ENCODE measurements at regions of chr20 and their contacts with region 1.

Region 1: GRCh38 chr20:35994994-35995453 is 26.6 kb downstream of the CNBD2 start:
- DNase-seq: peak; percentile 83
- ATAC-seq: peak; percentile 92
- H3K4me3 Mint-ChIP-seq: no peak overlapping the region
- H3K27ac Mint-ChIP-seq: no peak overlapping the region
- H3K4me1 Mint-ChIP-seq: peaks cover 4% of the 10 kb centered on the region
- H3K27me3 Mint-ChIP-seq: peaks cover 10% of the 10 kb centered on the region

Region 2: GRCh38 chr20:35954200-35954906 is 40.7 kb before region 1 on chr20 and contains the start of gene SCAND1:
- CTCF ChIA-PET with region 1: interaction called, 21 read pairs
- DNase-seq: peak; percentile 99
- ATAC-seq: peak; percentile 89
- H3K4me3 Mint-ChIP-seq: peak within 1 kb of the TSS; percentile 90
- H3K27ac Mint-ChIP-seq: peak within 1 kb of the TSS; percentile 100
- H3K4me1 Mint-ChIP-seq: peaks cover 23% of the 10 kb centered on the region
- H3K27me3 Mint-ChIP-seq: no peaks in the 10 kb centered on the region
- total RNA-seq, gene SCAND1: 61.2 to 63.9 TPM

Region 3: DNA sequence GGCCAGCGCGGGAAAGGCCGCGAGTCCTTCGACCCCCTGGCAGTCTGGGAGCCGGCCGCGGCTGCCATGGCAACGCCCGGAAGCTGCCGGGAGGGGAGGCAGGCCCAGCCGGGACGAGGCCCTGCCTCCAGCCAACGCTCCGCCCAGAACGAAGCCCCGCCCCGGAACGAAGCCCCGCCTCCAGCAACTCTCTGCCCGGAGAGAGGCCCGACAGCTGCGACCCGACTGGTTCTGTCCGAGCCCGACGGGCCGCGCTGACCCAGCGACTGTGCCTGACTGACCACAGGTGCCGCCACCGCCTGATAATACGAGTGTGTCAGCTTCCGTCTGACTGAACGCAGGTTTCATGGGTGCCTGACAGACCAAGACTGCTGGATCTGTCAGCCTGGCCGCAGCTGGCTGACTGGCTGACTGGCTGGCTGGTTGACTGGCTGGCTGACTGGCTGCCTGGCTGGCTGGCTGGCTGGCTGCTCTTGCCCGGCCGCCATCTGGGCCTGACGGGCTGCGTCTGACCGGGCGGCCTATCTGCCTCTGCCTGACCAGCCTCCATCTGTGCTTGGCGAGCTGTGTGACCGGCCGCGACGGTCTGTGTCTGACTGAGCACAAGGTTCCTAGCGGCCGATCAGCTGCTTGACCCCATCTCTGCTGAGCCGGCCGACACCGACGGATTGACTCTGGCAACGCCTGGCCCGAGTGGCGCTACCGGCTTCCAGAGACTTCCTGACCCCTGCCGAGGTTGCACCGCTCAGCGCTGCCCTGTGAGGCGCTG is 69.8 kb after region 1 on chr20:
- CTCF ChIA-PET with region 1: interaction called, 16 read pairs
- DNase-seq: peak; percentile 94
- ATAC-seq: peak; percentile 96
- H3K4me3 Mint-ChIP-seq: peak overlapping the region; percentile 84
- H3K27ac Mint-ChIP-seq: no peak overlapping the region
- H3K4me1 Mint-ChIP-seq: peaks cover 4% of the 10 kb centered on the region
- H3K27me3 Mint-ChIP-seq: peaks cover 23% of the 10 kb centered on the region

Region 4: DNA sequence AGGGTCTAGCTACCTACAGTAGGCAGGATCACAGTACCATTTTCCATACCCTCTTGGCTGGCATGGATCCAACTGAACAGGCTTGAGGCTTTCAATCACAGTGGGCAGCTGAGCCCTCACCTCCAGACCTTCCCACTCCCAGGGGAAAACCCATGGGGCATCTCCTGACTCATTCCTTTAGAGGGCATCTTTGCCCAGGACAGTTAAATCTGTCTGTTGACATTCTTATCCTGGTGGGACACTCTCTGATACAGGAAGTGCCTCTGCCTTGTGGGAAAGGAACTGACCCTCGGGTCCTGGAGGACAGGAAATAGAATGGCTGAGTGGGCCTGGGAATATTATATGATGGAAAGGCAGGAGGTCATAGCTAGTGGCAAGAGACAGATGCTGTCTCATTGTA is 149.3 kb after region 1 on chr20:
- CTCF ChIA-PET with region 1: interaction called, 243 read pairs
- DNase-seq: no peak
- ATAC-seq: no peak
- H3K4me3 Mint-ChIP-seq: no peak overlapping the region
- H3K27ac Mint-ChIP-seq: no peak overlapping the region
- H3K4me1 Mint-ChIP-seq: peaks cover 7% of the 10 kb centered on the region
- H3K27me3 Mint-ChIP-seq: peaks cover 17% of the 10 kb centered on the region

Region 5: DNA sequence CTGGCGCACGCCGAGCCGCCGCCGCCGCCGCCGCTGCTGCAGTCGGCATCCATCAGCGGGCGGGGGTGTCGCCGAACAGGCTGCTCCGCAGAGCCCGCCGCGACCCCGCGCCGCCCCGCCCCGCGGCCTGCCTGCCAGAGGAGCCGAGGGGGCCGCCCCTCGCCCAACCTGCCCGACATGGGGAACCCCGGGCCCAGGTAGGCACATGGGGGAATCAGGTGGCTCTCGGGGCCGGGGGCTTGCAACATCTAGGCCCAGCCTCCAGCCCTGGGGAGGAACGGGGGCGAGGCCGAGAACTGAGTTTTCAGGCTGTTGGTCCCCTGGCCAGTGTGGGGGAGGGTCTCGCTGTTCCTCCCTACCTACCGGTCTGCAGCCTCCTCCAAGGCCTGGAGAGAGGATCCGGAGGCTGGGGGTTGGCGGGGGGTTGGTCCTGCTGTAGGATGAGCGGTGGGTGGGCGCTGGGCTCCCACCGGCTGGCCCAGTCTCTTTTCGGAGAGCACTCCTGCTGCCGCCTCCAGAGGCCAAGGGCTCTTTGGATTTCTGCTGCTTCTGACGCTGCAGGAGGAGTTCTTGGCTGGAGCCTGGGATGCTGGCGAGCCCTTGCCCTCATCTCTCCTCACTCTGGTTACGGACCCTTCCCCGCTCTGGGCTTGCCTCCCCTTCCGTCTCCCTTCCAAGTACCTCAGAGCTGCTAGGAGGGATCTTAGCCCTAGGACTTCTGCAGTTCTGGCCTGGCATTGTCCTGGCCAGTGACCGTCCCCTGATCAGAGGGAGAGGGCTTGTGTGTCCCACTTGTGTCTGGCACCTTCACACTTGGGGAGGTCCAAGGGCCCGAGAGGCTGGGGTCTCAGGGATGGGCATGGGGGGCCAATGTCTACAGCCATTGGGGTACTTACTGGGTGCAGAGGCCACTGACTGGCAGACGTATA is 159.9 kb after region 1 on chr20 and contains the start of gene EPB41L1:
- CTCF ChIA-PET with region 1: interaction called, 13 read pairs
- DNase-seq: no peak
- ATAC-seq: no peak
- H3K4me3 Mint-ChIP-seq: no peak within 1 kb of the TSS
- H3K27ac Mint-ChIP-seq: no peak within 1 kb of the TSS
- H3K4me1 Mint-ChIP-seq: peaks cover 2% of the 10 kb centered on the region
- H3K27me3 Mint-ChIP-seq: peaks cover 39% of the 10 kb centered on the region
- total RNA-seq, gene EPB41L1: 0.28 TPM in 1 of 2 experiments, not detected in the other

Region 6: DNA sequence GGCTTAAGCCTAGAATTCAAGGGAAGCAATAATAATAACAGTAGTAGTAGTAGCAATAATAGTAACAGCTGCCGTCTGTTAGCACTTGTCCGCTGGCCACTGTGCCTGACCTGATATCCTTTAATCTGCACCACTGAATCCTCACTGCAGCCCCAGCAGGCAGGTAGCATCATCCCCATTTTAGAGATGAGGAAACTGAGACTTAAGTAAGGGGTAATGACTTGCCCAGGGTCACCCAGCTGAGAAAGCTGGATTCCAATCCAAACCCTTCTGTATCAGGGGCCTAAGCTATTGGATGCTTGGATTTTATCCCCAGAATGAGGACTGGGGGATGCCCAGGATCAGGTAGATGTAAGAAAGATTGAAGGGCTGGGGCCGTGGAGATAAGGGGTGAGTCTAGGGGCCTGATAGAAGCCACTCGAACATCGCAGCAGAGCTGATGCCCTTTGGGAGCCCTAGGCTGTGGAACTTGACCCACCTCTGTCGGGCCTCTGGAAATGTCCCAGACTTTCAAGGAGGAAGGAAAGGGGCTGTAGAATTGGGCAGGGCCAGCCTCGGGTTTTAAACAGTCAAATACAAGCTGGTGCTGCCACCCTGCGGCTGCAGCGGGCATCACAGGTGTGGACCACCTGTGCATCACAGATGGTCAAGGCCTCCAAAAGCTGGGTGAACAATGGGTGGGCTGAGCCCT is 444.2 kb after region 1 on chr20:
- CTCF ChIA-PET with region 1: interaction called, 14 read pairs
- DNase-seq: peak; percentile 77
- ATAC-seq: peak; percentile 59
- H3K4me3 Mint-ChIP-seq: no peak overlapping the region
- H3K27ac Mint-ChIP-seq: no peak overlapping the region
- H3K4me1 Mint-ChIP-seq: peaks cover 3% of the 10 kb centered on the region
- H3K27me3 Mint-ChIP-seq: peaks cover 2% of the 10 kb centered on the region